ENCODE measurements at regions of chr10 and their contacts with region 1.

Region 1: DNA sequence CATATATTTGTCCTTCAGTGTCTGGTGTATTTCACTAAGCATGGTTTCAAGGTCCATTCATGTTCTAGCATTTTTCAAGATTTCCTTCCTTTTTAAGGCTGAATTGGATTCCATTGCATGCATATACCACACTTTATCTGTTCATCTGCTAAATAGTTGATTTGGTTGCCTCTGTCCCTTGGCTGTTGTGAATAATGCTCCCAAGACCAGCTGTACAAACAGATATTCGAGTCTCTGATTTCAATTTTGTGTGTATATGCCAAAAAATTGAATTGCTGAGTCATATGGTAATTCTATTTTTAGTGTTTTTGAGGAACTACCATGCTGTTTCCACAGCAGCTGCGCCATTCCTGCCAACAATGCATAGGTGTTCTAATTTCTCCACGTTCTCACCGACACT is 216.4 kb downstream of the NRG3 start:
- DNase-seq: no peak
- H3K4me3 Mint-ChIP-seq: no peak overlapping the region
- H3K27ac Mint-ChIP-seq: no peak overlapping the region
- H3K4me1 Mint-ChIP-seq: no peaks in the 10 kb centered on the region
- H3K27me3 Mint-ChIP-seq: no peaks in the 10 kb centered on the region
- CTCF ChIP-seq: no peak

Region 2: DNA sequence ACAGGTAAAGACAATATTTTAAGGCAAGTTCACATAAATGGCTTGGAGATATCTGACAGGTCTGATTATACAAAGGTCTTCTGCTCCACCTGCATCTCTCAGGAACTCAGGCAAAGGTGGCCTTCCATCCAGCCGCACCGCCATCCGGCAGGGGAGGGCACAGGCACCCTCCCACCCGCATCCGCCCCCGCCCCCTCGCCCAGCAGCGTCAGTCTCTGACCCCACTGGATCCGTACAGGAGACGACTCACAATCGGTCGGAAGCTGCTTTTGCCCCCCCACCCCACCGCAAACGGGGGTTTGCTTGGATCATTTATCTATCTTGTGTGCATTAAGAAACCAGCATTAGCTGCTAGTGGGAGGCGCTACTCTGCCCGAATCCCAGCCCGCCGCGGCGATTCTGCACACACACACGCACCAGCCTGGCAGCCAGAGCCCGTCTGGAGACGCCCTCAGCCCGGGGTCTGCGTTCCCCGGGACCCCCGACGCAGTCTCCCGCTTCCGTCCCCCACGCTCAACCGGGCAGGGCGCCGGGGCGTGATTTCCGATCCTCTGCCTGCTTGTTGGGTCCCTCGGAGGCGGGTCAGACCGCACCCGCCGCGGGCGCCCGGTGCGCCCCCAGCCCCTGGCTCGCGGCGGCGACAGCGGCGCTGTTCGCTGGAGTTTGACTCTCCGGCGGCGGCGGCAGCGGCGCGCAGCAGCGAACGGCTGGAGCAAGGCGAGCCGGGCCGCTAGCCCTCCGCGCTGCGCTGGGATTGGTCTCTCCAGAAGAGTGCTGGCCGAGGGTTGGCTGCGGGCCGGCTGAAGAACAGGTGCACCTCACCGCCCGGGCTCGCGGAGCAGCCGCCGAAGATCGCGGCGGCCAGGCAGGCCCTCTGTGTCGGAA is 217.2 kb before region 1 on chr10:
- CTCF ChIA-PET with region 1: interaction called, 11 read pairs
- intact Hi-C with region 1: no loop called
- DNase-seq: peak; percentile 86
- H3K4me3 Mint-ChIP-seq: peak overlapping the region; percentile 88
- H3K27ac Mint-ChIP-seq: no peak overlapping the region
- H3K4me1 Mint-ChIP-seq: peaks cover 38% of the 10 kb centered on the region
- H3K27me3 Mint-ChIP-seq: no peaks in the 10 kb centered on the region
- CTCF ChIP-seq: no peak

Measured in Calu3 (cell line).